Activated CD4-positive, alpha-beta T cell treated with anti-CD3 and anti-CD28 coated beads for 36 hours (primary cell): ENCODE measurements at regions of chrX and their contacts with region 1.

Region 1: GRCh38 chrX:135484641-135485289 is 35.7 kb upstream of the INTS6L start:
- DNase-seq: peak; percentile 27
- ATAC-seq: no peak
- H3K4me3 Mint-ChIP-seq: no peak overlapping the region
- H3K27ac Mint-ChIP-seq: no peak overlapping the region
- H3K4me1 Mint-ChIP-seq: peaks cover 3% of the 10 kb centered on the region
- H3K27me3 Mint-ChIP-seq: no peaks in the 10 kb centered on the region

Region 2: GRCh38 chrX:135572436-135572835 is 87.7 kb after region 1 on chrX:
- CTCF ChIA-PET with region 1: interaction called, 6 read pairs
- POLR2A ChIA-PET with region 1: no interaction called
- intact Hi-C with region 1: loop called (anchors 1 to 2 kb)
- DNase-seq: no peak
- ATAC-seq: no peak
- H3K4me3 Mint-ChIP-seq: no peak overlapping the region
- H3K27ac Mint-ChIP-seq: no peak overlapping the region
- H3K4me1 Mint-ChIP-seq: peaks cover 7% of the 10 kb centered on the region
- H3K27me3 Mint-ChIP-seq: no peaks in the 10 kb centered on the region

Region 3: GRCh38 chrX:135596495-135596894 is 111.7 kb after region 1 on chrX:
- CTCF ChIA-PET with region 1: interaction called, 6 read pairs
- POLR2A ChIA-PET with region 1: no interaction called
- intact Hi-C with region 1: loop called (anchors 1 kb)
- DNase-seq: peak; percentile 76
- ATAC-seq: peak; percentile 71
- H3K4me3 Mint-ChIP-seq: no peak overlapping the region
- H3K27ac Mint-ChIP-seq: no peak overlapping the region
- H3K4me1 Mint-ChIP-seq: no peaks in the 10 kb centered on the region
- H3K27me3 Mint-ChIP-seq: peaks cover 5% of the 10 kb centered on the region

Region 4: GRCh38 chrX:135697601-135698000 is 212.8 kb after region 1 on chrX:
- CTCF ChIA-PET with region 1: no interaction called
- POLR2A ChIA-PET with region 1: no interaction called
- intact Hi-C with region 1: loop called in 1 of 2 experiments (anchors 5 kb)
- DNase-seq: no peak
- ATAC-seq: no peak
- H3K4me3 Mint-ChIP-seq: no peak overlapping the region
- H3K27ac Mint-ChIP-seq: no peak overlapping the region
- H3K4me1 Mint-ChIP-seq: no peaks in the 10 kb centered on the region
- H3K27me3 Mint-ChIP-seq: peaks cover 3% of the 10 kb centered on the region